Adrenal gland (tissue), 19 donors: ENCODE measurements at regions of chr19 and their contacts with region 1.

Region 1: GRCh38 chr19:43465468-43466120 is at the start of gene LYPD3:
- DNase-seq: peak; percentile 49 to 75 (median 65)
- H3K4me3 ChIP-seq: no peak within 1 kb of the TSS
- H3K27ac ChIP-seq: peak within 1 kb of the TSS in 4 of 5 donors; percentile 73 to 90 (median 88)
- H3K4me1 ChIP-seq: peaks cover 6 to 11% of the 10 kb centered on the region in 2 donors
- H3K27me3 ChIP-seq: no peaks in the 10 kb centered on the region
- CTCF ChIP-seq: no peak
- POLR2A ChIP-seq: no peak
- total RNA-seq, gene LYPD3: 0.18 to 1.9 (median 1.1) TPM

Region 2: DNA sequence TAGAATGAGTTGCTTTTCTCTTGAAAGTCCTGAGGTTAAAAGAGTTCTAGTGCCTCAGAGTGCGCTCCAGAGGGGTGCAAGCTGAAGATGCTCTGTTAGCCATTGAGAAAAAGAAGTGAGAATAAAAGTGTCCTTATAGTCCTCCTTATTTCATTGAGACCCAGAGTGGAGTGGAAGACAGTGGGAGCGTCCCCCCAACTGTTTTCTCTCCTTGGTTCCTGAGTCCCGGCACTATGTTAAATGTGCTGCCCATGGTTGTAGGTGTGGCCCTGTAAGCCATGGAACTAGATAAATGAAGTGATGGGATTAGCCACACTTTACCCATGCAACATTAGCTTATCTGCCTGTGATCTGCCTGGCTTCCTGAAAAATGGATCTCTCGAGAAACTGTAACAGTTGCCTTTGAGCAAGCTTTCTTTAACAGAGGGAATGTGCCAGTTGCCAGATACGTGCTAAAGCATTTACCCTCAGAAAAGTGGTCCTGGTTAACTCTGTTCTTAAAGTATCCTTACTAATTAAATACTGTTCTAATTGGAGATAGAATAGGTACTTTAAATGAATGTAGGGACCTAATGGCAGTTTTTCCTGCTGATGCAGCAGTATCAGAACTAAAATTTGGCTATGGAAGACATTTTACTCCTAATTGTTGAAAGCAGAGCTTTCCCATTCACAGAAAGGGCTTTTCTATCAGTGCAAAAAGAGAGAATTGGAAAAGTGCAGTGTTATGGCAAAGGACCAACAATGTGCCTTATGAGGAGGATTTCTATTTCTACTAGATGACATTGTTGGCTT is 174.8 kb before region 1 on chr19:
- intact Hi-C with region 1: no loop called
- DNase-seq: no peak
- H3K4me3 ChIP-seq: no peak overlapping the region
- H3K27ac ChIP-seq: no peak overlapping the region
- H3K4me1 ChIP-seq: no peaks in the 10 kb centered on the region
- H3K27me3 ChIP-seq: no peaks in the 10 kb centered on the region
- CTCF ChIP-seq: no peak
- POLR2A ChIP-seq: no peak

Region 3: GRCh38 chr19:43503501-43504425 is 38.2 kb after region 1 on chr19:
- intact Hi-C with region 1: loop called in 1 of 2 experiments (anchors 5 kb)
- DNase-seq: peak; percentile 95 to 100 (median 99)
- H3K4me3 ChIP-seq: peak overlapping the region; percentile 6 to 95 (median 67)
- H3K27ac ChIP-seq: peak overlapping the region; percentile 70 to 94 (median 84)
- H3K4me1 ChIP-seq: peaks cover 12 to 24% of the 10 kb centered on the region in 2 donors
- H3K27me3 ChIP-seq: no peaks in the 10 kb centered on the region
- CTCF ChIP-seq: peak in 1 of 6 experiments; percentile 8
- POLR2A ChIP-seq: peak in 1 of 2 donors; percentile 60